Right lobe of liver (tissue), 6 donors: ENCODE measurements at regions of chr2 and their contacts with region 1.

Region 1: GRCh38 chr2:217872319-217872718 is 130.5 kb downstream of the TNS1 start:
- DNase-seq: no peak
- ATAC-seq: no peak
- H3K4me3 ChIP-seq: no peak overlapping the region
- H3K27ac ChIP-seq: no peak overlapping the region
- H3K4me1 ChIP-seq: no peaks in the 10 kb centered on the region
- H3K27me3 ChIP-seq: no peaks in the 10 kb centered on the region
- CTCF ChIP-seq: no peak
- POLR2A ChIP-seq: no peak

Region 2: GRCh38 chr2:217604527-217605194 is 267.7 kb before region 1 on chr2:
- intact Hi-C with region 1: no loop called
- DNase-seq: no peak
- ATAC-seq: no peak
- H3K4me3 ChIP-seq: no peak overlapping the region
- H3K27ac ChIP-seq: no peak overlapping the region
- H3K4me1 ChIP-seq: no peaks in the 10 kb centered on the region
- H3K27me3 ChIP-seq: no peaks in the 10 kb centered on the region
- CTCF ChIP-seq: no peak
- POLR2A ChIP-seq: no peak

Region 3: GRCh38 chr2:217804786-217805667 is 67.3 kb before region 1 on chr2:
- intact Hi-C with region 1: loop called in 1 of 2 experiments (anchors 10 kb)
- DNase-seq: no peak
- ATAC-seq: no peak
- H3K4me3 ChIP-seq: no peak overlapping the region
- H3K27ac ChIP-seq: no peak overlapping the region
- H3K4me1 ChIP-seq: peaks cover 0 to 8% (median 0%) of the 10 kb centered on the region in 4 donors
- H3K27me3 ChIP-seq: no peaks in the 10 kb centered on the region
- CTCF ChIP-seq: no peak
- POLR2A ChIP-seq: no peak